Naive thymus-derived CD4-positive, alpha-beta T cell (primary cell): ENCODE measurements at regions of chrX and their contacts with region 1.

Region 1: GRCh38 chrX:109536439-109537336 is at the start of gene NXT2:
- DNase-seq: peak; percentile 64 to 89 (median 83)
- ATAC-seq: peak; percentile 100
- H3K4me3 ChIP-seq: peak within 1 kb of the TSS; percentile 87
- H3K4me3 Mint-ChIP-seq: peak within 1 kb of the TSS; percentile 79 to 98 (median 95)
- H3K27ac ChIP-seq: peak within 1 kb of the TSS; percentile 87
- H3K27ac Mint-ChIP-seq: peak within 1 kb of the TSS; percentile 92 to 99 (median 98)
- H3K4me1 ChIP-seq: peaks cover 0 to 3% of the 10 kb centered on the region in 2 donors
- H3K4me1 Mint-ChIP-seq: peaks cover 0 to 14% (median 8%) of the 10 kb centered on the region in 7 donors
- H3K27me3 ChIP-seq: no peaks in the 10 kb centered on the region
- H3K27me3 Mint-ChIP-seq: peaks cover 0 to 19% (median 12%) of the 10 kb centered on the region in 5 donors
- total RNA-seq, gene NXT2: 5.7 to 13.5 (median 7.7) TPM

Region 2: GRCh38 chrX:108091266-108091877 is 1445.3 kb before region 1 on chrX and contains the starts of genes ATG4A and PSMD10:
- CTCF ChIA-PET with region 1: no interaction called
- POLR2A ChIA-PET with region 1: no interaction called
- intact Hi-C with region 1: loop called in 1 of 2 experiments (anchors 2 kb)
- DNase-seq: peak; percentile 65 to 91 (median 85)
- ATAC-seq: peak; percentile 97
- H3K4me3 ChIP-seq: peak within 1 kb of the TSS; percentile 85
- H3K4me3 Mint-ChIP-seq: no peak within 1 kb of the TSS
- H3K27ac ChIP-seq: peak within 1 kb of the TSS; percentile 88
- H3K27ac Mint-ChIP-seq: no peak within 1 kb of the TSS
- H3K4me1 ChIP-seq: no peaks in the 10 kb centered on the region
- H3K4me1 Mint-ChIP-seq: peaks cover 0 to 28% (median 15%) of the 10 kb centered on the region in 7 donors
- H3K27me3 ChIP-seq: no peaks in the 10 kb centered on the region
- H3K27me3 Mint-ChIP-seq: no peaks in the 10 kb centered on the region
- total RNA-seq, gene ATG4A: 6.7 to 11.4 (median 7.5) TPM
- total RNA-seq, gene PSMD10: 17.6 to 36.8 (median 22.1) TPM

Region 3: DNA sequence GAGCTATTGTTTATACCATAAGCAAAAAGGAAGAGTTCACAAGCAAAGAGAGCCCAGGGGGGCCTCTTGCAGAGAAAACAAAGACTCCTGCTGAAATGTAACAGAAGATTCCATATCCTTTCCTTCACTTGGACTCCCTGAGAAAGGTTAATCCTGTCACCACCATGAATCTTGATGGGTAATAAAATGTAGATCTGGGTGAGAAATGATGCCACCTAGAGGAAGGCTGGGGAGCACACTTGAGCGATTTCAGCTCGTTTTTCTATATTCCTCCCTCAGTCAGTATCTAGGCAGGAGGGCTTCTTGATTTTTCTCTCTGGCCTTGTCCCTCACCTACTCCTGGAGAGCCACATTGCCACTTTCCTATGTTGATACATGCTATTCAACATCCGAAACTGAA is 98.5 kb after region 1 on chrX:
- CTCF ChIA-PET with region 1: no interaction called
- POLR2A ChIA-PET with region 1: no interaction called
- intact Hi-C with region 1: loop called in 1 of 2 experiments (anchors 2 kb)
- DNase-seq: no peak
- ATAC-seq: no peak
- H3K4me3 ChIP-seq: no peak overlapping the region
- H3K4me3 Mint-ChIP-seq: no peak overlapping the region
- H3K27ac ChIP-seq: no peak overlapping the region
- H3K27ac Mint-ChIP-seq: no peak overlapping the region
- H3K4me1 ChIP-seq: no peaks in the 10 kb centered on the region
- H3K4me1 Mint-ChIP-seq: peaks cover 0 to 26% (median 5%) of the 10 kb centered on the region in 7 donors
- H3K27me3 ChIP-seq: no peaks in the 10 kb centered on the region
- H3K27me3 Mint-ChIP-seq: no peaks in the 10 kb centered on the region

Region 4: GRCh38 chrX:110002300-110003166 is 465.8 kb after region 1 on chrX and contains the start of gene TMEM164:
- CTCF ChIA-PET with region 1: no interaction called
- POLR2A ChIA-PET with region 1: no interaction called
- intact Hi-C with region 1: loop called in 1 of 2 experiments (anchors 1 kb)
- DNase-seq: peak; percentile 58 to 82 (median 75)
- ATAC-seq: peak; percentile 87
- H3K4me3 ChIP-seq: peak within 1 kb of the TSS; percentile 54
- H3K4me3 Mint-ChIP-seq: peak within 1 kb of the TSS; percentile 76 to 96 (median 88)
- H3K27ac ChIP-seq: peak within 1 kb of the TSS; percentile 64
- H3K27ac Mint-ChIP-seq: peak within 1 kb of the TSS; percentile 82 to 95 (median 88)
- H3K4me1 ChIP-seq: no peaks in the 10 kb centered on the region
- H3K4me1 Mint-ChIP-seq: peaks cover 14 to 42% (median 34%) of the 10 kb centered on the region in 7 donors
- H3K27me3 ChIP-seq: no peaks in the 10 kb centered on the region
- H3K27me3 Mint-ChIP-seq: no peaks in the 10 kb centered on the region
- total RNA-seq, gene TMEM164: 16.3 to 30.1 (median 17.9) TPM